ENCODE measurements at regions of chr14 and their contacts with region 1.

Region 1: GRCh38 chr14:62162998-62163589 is 400.9 kb downstream of the SNAPC1 start:
- DNase-seq: peak in 3 of 5 donors; percentile 32 to 69 (median 65)
- H3K4me3 ChIP-seq: no peak overlapping the region
- H3K27ac ChIP-seq: no peak overlapping the region
- H3K4me1 ChIP-seq: no peaks in the 10 kb centered on the region
- H3K27me3 ChIP-seq: no peaks in the 10 kb centered on the region
- CTCF ChIP-seq: peak; percentile 67

Region 2: DNA sequence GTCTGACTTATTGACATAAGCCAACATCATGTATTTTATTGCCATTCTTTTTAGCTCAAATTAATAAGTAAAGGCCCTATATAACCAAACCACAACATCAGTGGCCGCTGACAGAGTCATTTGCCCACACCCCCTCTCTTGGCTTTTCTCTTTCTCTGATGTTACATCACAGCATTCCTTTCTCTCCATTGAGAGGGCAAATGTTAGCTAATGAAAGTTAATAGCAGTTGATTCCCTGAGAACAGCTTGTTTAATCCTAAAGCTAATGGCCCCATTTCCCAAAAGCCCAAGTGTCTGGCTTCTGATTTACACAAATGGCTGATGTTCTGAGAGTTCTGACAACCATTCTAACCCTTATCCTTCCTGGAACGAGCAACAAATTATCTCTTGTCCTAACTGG is 92.1 kb before region 1 on chr14:
- intact Hi-C with region 1: no loop called
- DNase-seq: peak in 1 of 5 donors; percentile 6
- H3K4me3 ChIP-seq: no peak overlapping the region
- H3K27ac ChIP-seq: no peak overlapping the region
- H3K4me1 ChIP-seq: no peaks in the 10 kb centered on the region
- H3K27me3 ChIP-seq: no peaks in the 10 kb centered on the region
- CTCF ChIP-seq: no peak

Region 3: DNA sequence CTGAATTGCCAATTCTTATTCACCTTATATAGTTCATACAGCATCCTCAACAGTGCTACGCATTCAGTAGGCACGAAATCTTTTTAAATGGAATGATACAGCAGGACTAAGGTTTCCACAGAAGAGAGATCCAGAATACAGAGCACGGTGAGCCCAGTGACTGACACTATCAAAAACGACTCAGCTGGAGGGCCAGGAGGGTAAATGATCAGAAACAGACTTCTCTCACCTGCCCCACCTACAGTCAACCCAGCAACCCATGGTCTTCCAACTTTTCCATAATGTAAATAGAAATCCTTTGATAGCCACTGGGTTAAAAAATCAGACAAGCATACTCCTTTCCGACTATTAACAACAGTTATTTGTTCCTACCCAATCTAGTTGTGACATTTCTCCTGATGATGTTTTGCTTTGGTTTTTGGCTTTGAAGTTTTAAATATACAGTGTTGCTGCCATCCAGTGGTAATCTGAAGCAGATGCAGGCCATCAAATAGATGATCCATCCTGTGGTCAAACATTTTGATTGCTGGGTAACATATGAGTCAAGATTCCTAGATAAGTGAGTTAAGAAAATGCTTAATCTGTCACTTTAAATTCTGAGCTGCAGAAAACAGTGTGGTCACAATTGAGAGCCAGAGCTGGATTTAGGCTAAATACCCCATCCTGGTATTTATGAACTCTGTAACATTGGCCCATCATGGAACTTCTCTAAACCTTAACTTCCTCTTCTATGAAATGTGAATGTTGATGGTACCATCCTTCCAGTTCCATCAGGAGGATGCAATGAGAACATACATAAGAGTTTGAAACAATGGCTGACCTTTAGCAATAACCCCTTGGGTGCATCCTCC is 1113.6 kb after region 1 on chr14:
- intact Hi-C with region 1: loop called (anchors 10 kb)
- DNase-seq: peak in 2 of 5 donors; percentile 39 to 67
- H3K4me3 ChIP-seq: no peak overlapping the region
- H3K27ac ChIP-seq: no peak overlapping the region
- H3K4me1 ChIP-seq: no peaks in the 10 kb centered on the region
- H3K27me3 ChIP-seq: no peaks in the 10 kb centered on the region
- CTCF ChIP-seq: peak; percentile 74